ENCODE measurements at regions of chr11 and their contacts with region 1.

Region 1: DNA sequence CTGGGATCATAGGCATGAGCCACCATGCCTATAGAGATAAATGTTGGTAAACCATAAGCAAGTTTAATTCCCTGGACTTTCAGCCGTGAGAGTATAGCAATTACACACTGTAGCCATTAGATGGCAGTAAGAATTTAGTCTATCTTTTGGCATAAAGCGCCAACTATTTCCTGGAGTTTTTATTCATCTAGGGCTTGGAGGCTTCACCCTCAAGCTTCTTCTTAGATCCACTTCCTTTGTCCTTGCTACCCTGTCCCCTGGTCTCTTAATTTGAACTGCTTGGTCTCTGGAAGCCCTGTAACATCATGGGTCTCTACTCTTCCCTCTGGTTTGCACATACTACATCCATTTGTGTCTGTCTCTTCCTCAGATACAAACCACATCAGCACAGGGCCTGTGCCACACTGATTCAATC is 38.2 kb downstream of the OR10A6 start:
- DNase-seq: no peak
- H3K4me3 ChIP-seq: no peak overlapping the region
- H3K27ac ChIP-seq: no peak overlapping the region
- H3K4me1 ChIP-seq: no peaks in the 10 kb centered on the region
- H3K27me3 ChIP-seq: no peaks in the 10 kb centered on the region
- CTCF ChIP-seq: peak; percentile 38 to 69 (median 58)
- POLR2A ChIP-seq: no peak

Region 2: GRCh38 chr11:7986768-7987559 is 94.1 kb after region 1 on chr11 and contains the start of gene EIF3F:
- intact Hi-C with region 1: loop called (anchors 10 kb)
- DNase-seq: peak; percentile 86 to 95
- H3K4me3 ChIP-seq: peak within 1 kb of the TSS; percentile 59 to 91 (median 70)
- H3K27ac ChIP-seq: peak within 1 kb of the TSS; percentile 81 to 89
- H3K4me1 ChIP-seq: peaks cover 10 to 14% of the 10 kb centered on the region in 2 donors
- H3K27me3 ChIP-seq: no peaks in the 10 kb centered on the region
- CTCF ChIP-seq: peak; percentile 92 to 97 (median 92)
- POLR2A ChIP-seq: no peak
- total RNA-seq, gene EIF3F: 145 to 180 (median 151) TPM

Region 3: GRCh38 chr11:8477680-8478079 is 584.8 kb after region 1 on chr11:
- intact Hi-C with region 1: no loop called
- DNase-seq: no peak
- H3K4me3 ChIP-seq: no peak overlapping the region
- H3K27ac ChIP-seq: no peak overlapping the region
- H3K4me1 ChIP-seq: no peaks in the 10 kb centered on the region
- H3K27me3 ChIP-seq: no peaks in the 10 kb centered on the region
- CTCF ChIP-seq: no peak
- POLR2A ChIP-seq: no peak

Region 4: GRCh38 chr11:8503910-8504364 is 611.1 kb after region 1 on chr11:
- intact Hi-C with region 1: loop called (anchors 5 kb)
- DNase-seq: no peak
- H3K4me3 ChIP-seq: no peak overlapping the region
- H3K27ac ChIP-seq: no peak overlapping the region
- H3K4me1 ChIP-seq: no peaks in the 10 kb centered on the region
- H3K27me3 ChIP-seq: no peaks in the 10 kb centered on the region
- CTCF ChIP-seq: no peak
- POLR2A ChIP-seq: no peak

Region 5: DNA sequence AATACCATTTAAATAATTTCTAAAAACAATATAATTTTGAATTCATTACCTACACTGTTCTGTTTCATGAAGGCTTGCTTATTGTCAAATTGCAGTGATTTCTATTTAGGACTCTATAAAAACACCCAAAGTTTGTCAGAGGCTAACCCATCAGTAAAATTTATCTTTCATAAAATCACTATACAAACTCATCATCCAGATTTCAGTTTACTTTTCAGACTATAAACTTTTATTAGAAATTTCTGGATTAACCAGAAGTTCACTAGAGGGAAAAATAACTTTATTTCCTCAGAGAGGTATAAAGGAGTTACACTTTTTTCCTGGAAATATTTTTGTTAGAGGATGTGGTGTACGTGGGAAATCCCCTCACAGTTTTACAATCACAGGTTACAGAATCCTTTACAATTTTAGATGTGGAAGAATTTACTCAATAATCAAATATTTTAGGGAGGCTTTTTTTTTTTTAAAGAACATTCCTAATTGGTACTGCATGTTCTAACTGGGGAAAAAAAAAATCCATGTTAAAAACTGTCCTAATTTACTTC is 1947.7 kb after region 1 on chr11:
- intact Hi-C with region 1: no loop called
- DNase-seq: no peak
- H3K4me3 ChIP-seq: no peak overlapping the region
- H3K27ac ChIP-seq: no peak overlapping the region
- H3K4me1 ChIP-seq: no peaks in the 10 kb centered on the region
- H3K27me3 ChIP-seq: no peaks in the 10 kb centered on the region
- CTCF ChIP-seq: no peak
- POLR2A ChIP-seq: no peak

Measured in breast epithelium (tissue), 4 donors.